ENCODE measurements at regions of chr1 and their contacts with region 1.

Region 1: DNA sequence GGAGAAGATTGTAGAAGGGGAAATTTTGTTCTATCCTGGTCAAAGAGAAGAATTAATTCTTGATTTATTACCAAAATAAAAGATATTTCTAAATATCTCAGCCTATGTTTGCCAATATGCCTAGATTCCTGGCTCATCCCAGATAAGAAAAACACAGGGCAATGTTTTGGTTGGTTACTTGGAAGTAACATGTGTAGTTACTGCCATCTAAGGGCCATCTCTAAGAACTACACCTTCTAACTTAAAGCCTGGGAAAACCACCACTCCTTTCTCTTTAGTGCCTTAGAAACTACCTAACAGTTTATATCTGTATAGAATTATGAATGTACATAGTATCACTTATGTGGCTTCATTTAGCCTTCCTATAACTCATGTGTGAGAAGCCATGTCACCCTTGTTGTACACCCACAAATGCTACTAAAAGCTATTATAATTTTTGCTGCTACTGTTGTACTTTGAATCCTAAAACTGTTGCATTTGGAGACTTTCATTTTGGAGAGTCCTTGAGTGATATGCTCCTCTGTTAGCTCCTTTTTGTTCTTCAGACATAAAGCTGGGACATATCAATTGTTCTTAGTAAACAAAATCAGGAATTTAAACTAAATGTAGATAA is 4.5 kb downstream of the AIM2 start:
- DNase-seq: peak; percentile 69
- ATAC-seq: no peak
- H3K4me3 ChIP-seq: no peak overlapping the region
- H3K4me3 Mint-ChIP-seq: peak overlapping the region; percentile 68
- H3K27ac ChIP-seq: peak overlapping the region in 1 of 2 donors; percentile 89
- H3K27ac Mint-ChIP-seq: peak overlapping the region; percentile 86
- H3K4me1 ChIP-seq: peaks cover 56 to 62% of the 10 kb centered on the region in 2 donors
- H3K4me1 Mint-ChIP-seq: peaks cover 65% of the 10 kb centered on the region
- H3K27me3 ChIP-seq: no peaks in the 10 kb centered on the region
- H3K27me3 Mint-ChIP-seq: no peaks in the 10 kb centered on the region
- CTCF ChIP-seq: peak; percentile 94

Region 2: GRCh38 chr1:158117854-158118704 is 954.0 kb before region 1 on chr1:
- CTCF ChIA-PET with region 1: interaction called, 7 read pairs
- POLR2A ChIA-PET with region 1: no interaction called
- intact Hi-C with region 1: loop called (anchors 10 kb)
- DNase-seq: peak; percentile 76
- ATAC-seq: peak; percentile 58
- H3K4me3 ChIP-seq: peak overlapping the region in 3 of 5 experiments; percentile 15 to 44 (median 32)
- H3K4me3 Mint-ChIP-seq: peak overlapping the region; percentile 77
- H3K27ac ChIP-seq: no peak overlapping the region
- H3K27ac Mint-ChIP-seq: no peak overlapping the region
- H3K4me1 ChIP-seq: peaks cover 22 to 32% of the 10 kb centered on the region in 2 donors
- H3K4me1 Mint-ChIP-seq: peaks cover 28% of the 10 kb centered on the region
- H3K27me3 ChIP-seq: peaks cover 0 to 38% (median 16%) of the 10 kb centered on the region in 4 experiments
- H3K27me3 Mint-ChIP-seq: peaks cover 35% of the 10 kb centered on the region
- CTCF ChIP-seq: peak; percentile 85

Region 3: GRCh38 chr1:158285756-158286241 is 786.3 kb before region 1 on chr1:
- CTCF ChIA-PET with region 1: interaction called, 3 read pairs
- POLR2A ChIA-PET with region 1: no interaction called
- intact Hi-C with region 1: loop called (anchors 5 kb)
- DNase-seq: peak; percentile 91
- ATAC-seq: peak; percentile 77
- H3K4me3 ChIP-seq: peak overlapping the region; percentile 3 to 59 (median 30)
- H3K4me3 Mint-ChIP-seq: peak overlapping the region; percentile 86
- H3K27ac ChIP-seq: peak overlapping the region; percentile 75 to 79
- H3K27ac Mint-ChIP-seq: peak overlapping the region; percentile 94
- H3K4me1 ChIP-seq: peaks cover 80 to 93% of the 10 kb centered on the region in 2 donors
- H3K4me1 Mint-ChIP-seq: peaks cover 72% of the 10 kb centered on the region
- H3K27me3 ChIP-seq: no peaks in the 10 kb centered on the region
- H3K27me3 Mint-ChIP-seq: no peaks in the 10 kb centered on the region
- CTCF ChIP-seq: no peak

Region 4: GRCh38 chr1:158564608-158565007 is 507.5 kb before region 1 on chr1:
- CTCF ChIA-PET with region 1: no interaction called
- POLR2A ChIA-PET with region 1: no interaction called
- intact Hi-C with region 1: no loop called
- DNase-seq: peak; percentile 33
- ATAC-seq: no peak
- H3K4me3 ChIP-seq: peak overlapping the region in 1 of 5 experiments; percentile 9
- H3K4me3 Mint-ChIP-seq: no peak overlapping the region
- H3K27ac ChIP-seq: peak overlapping the region in 1 of 2 donors; percentile 2
- H3K27ac Mint-ChIP-seq: no peak overlapping the region
- H3K4me1 ChIP-seq: peaks cover 9 to 14% of the 10 kb centered on the region in 2 donors
- H3K4me1 Mint-ChIP-seq: peaks cover 15% of the 10 kb centered on the region
- H3K27me3 ChIP-seq: peaks cover 0 to 4% (median 0%) of the 10 kb centered on the region in 4 experiments
- H3K27me3 Mint-ChIP-seq: peaks cover 9% of the 10 kb centered on the region
- CTCF ChIP-seq: no peak

Region 5: DNA sequence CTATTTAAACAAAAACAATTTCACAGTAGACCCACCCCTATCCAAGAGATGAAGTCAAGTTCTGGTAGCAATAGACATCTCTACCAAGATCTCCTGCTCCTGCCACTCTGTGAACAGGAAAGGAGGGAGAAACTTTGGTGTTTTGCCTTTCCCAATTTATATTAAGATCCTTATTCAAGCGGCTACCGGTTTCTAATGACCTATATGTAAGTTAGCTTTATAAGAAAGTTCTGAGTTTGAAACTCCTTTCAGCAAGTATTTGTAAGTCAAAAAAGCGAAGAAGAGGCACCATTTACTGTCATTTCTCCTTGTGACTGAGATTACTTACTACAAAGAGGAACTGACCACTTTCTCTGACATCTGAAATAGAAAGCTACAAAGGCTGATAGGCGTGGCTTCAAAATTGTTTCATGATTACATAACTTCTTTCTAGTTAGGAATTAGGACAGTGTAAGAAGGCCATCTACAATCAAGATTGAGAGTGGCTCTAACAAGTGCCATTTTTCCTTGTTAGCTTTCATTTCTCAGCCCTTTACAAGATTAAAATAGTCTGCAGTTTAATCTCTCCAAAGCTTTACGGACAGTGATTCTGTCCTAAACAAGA is 241.1 kb before region 1 on chr1 and contains the start of gene MNDA:
- CTCF ChIA-PET with region 1: no interaction called
- POLR2A ChIA-PET with region 1: no interaction called
- intact Hi-C with region 1: loop called (anchors 5 kb)
- DNase-seq: peak; percentile 74
- ATAC-seq: peak; percentile 95
- H3K4me3 ChIP-seq: peak within 1 kb of the TSS; percentile 11 to 86 (median 49)
- H3K4me3 Mint-ChIP-seq: peak within 1 kb of the TSS; percentile 89
- H3K27ac ChIP-seq: peak within 1 kb of the TSS; percentile 72 to 74
- H3K27ac Mint-ChIP-seq: peak within 1 kb of the TSS; percentile 95
- H3K4me1 ChIP-seq: peaks cover 11 to 14% of the 10 kb centered on the region in 2 donors
- H3K4me1 Mint-ChIP-seq: peaks cover 29% of the 10 kb centered on the region
- H3K27me3 ChIP-seq: no peaks in the 10 kb centered on the region
- H3K27me3 Mint-ChIP-seq: no peaks in the 10 kb centered on the region
- CTCF ChIP-seq: no peak
- total RNA-seq, gene MNDA: 8.5 and 10.1 TPM in 2 replicates

Region 6: GRCh38 chr1:159015440-159015909 is 56.6 kb before region 1 on chr1:
- CTCF ChIA-PET with region 1: interaction called, 23 read pairs
- POLR2A ChIA-PET with region 1: interaction called, 14 read pairs
- intact Hi-C with region 1: loop called (anchors 1 kb)
- DNase-seq: peak; percentile 87
- ATAC-seq: peak; percentile 99
- H3K4me3 ChIP-seq: peak overlapping the region in 4 of 5 experiments; percentile 7 to 100 (median 20)
- H3K4me3 Mint-ChIP-seq: peak overlapping the region; percentile 87
- H3K27ac ChIP-seq: peak overlapping the region; percentile 63 to 72
- H3K27ac Mint-ChIP-seq: peak overlapping the region; percentile 95
- H3K4me1 ChIP-seq: peaks cover 47 to 52% of the 10 kb centered on the region in 2 donors
- H3K4me1 Mint-ChIP-seq: peaks cover 62% of the 10 kb centered on the region
- H3K27me3 ChIP-seq: no peaks in the 10 kb centered on the region
- H3K27me3 Mint-ChIP-seq: no peaks in the 10 kb centered on the region
- CTCF ChIP-seq: no peak

Region 7: DNA sequence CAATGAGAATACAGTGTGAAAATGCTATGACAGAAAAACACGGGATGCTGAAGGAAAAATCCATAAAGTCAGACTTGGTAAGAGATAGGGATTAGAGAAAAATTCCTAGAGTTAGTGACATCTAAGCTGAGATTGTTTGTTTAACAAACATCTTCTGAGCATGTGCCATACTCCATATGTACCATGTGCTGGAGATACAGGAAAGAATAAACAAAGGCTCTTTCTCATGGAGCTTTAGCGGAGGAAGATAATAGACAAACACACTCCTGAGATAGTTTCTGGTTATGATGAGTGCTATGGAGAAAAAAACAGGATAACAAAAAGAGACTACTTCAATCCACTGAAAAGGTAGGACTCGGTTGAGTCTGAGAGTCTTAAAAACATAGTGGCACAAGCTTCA is 26.5 kb after region 1 on chr1:
- CTCF ChIA-PET with region 1: no interaction called
- POLR2A ChIA-PET with region 1: no interaction called
- intact Hi-C with region 1: no loop called
- DNase-seq: no peak
- ATAC-seq: no peak
- H3K4me3 ChIP-seq: no peak overlapping the region
- H3K4me3 Mint-ChIP-seq: no peak overlapping the region
- H3K27ac ChIP-seq: no peak overlapping the region
- H3K27ac Mint-ChIP-seq: no peak overlapping the region
- H3K4me1 ChIP-seq: no peaks in the 10 kb centered on the region
- H3K4me1 Mint-ChIP-seq: no peaks in the 10 kb centered on the region
- H3K27me3 ChIP-seq: no peaks in the 10 kb centered on the region
- H3K27me3 Mint-ChIP-seq: no peaks in the 10 kb centered on the region
- CTCF ChIP-seq: no peak